Activated CD8-positive, alpha-beta T cell treated with anti-CD3 and anti-CD28 coated beads, Interleukin-2, amount 10 ng/mL, durations not matched to agents 7 days and 5 days (primary cell): ENCODE measurements at regions of chr6 and their contacts with region 1.

Region 1: DNA sequence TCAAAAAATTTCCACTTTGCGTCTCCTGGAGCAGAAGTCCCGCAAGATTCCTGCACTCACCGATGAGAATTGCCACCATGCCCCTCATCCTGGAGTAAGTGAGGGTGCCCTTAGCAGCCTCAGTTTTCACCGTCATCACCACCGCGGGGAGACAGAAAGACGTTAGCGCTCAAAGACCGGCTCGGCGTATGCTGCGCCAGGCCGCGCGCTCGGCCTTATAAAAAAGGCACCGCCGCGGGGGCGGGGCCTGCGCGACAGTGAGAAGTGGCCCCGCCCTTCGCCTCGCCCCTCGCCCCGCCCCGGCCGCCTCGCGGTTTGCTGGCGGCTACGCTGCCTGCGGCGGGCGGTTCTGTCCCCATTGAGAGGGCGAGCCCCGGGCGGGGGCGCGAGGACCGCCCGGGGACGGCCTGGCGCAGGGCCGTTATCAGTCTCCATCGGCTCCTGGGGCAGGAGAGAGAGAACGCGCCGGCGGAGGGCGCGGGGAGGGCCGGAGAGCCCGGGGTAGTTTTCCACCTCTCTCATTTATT is 122.3 kb upstream of the SLC2A12 start:
- DNase-seq: peak; percentile 92
- ATAC-seq: peak; percentile 77
- H3K4me3 Mint-ChIP-seq: peak overlapping the region; percentile 99
- H3K27ac Mint-ChIP-seq: peak overlapping the region; percentile 99
- H3K4me1 Mint-ChIP-seq: peaks cover 71% of the 10 kb centered on the region
- H3K27me3 Mint-ChIP-seq: no peaks in the 10 kb centered on the region

Region 2: GRCh38 chr6:134196568-134197193 is 21.9 kb after region 1 on chr6:
- CTCF ChIA-PET with region 1: interaction called, 24 read pairs
- POLR2A ChIA-PET with region 1: no interaction called
- DNase-seq: peak; percentile 44
- ATAC-seq: peak; percentile 69
- H3K4me3 Mint-ChIP-seq: no peak overlapping the region
- H3K27ac Mint-ChIP-seq: peak overlapping the region; percentile 74
- H3K4me1 Mint-ChIP-seq: peaks cover 33% of the 10 kb centered on the region
- H3K27me3 Mint-ChIP-seq: no peaks in the 10 kb centered on the region

Region 3: DNA sequence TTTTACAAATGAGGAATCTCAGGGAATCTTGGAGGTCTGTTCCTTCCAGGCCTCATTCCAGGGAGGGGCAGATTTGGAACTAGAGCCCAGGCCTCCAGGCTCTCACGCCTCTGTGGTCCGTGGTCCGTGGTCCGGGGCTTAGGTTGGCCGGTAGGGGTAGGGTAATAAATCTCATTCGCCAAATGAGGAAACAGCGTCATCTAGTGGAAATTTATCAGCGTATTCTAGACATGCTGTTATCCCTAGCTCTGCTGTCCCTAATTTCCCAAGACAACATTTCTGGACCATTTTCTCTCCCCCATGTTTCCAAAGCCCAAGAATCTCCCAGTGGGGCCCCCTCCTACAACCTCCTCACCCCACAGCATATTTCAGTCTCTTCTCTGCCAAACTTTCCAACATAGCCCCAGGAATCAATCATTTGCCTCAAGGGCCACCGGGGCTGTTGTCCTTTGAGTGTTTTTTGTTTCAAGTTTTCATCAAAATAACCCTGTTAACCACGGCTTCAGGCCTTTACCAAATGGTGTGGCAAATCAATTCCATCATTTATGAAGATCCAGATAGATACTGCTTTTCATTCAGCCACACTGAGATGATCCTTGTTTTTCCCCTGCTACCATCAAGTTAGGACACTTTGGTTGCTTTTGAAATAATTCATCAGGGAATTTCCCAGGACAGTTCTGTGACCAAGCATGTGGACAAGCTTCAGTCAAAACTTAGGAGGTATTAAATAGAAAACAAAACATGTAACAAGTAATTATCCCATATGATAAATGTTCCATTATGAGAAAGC is 648.4 kb after region 1 on chr6:
- CTCF ChIA-PET with region 1: interaction called, 14 read pairs
- POLR2A ChIA-PET with region 1: no interaction called
- DNase-seq: peak; percentile 45
- ATAC-seq: peak; percentile 90
- H3K4me3 Mint-ChIP-seq: no peak overlapping the region
- H3K27ac Mint-ChIP-seq: no peak overlapping the region
- H3K4me1 Mint-ChIP-seq: no peaks in the 10 kb centered on the region
- H3K27me3 Mint-ChIP-seq: peaks cover 6% of the 10 kb centered on the region